ENCODE measurements at regions of chr2 and their contacts with region 1.

Region 1: GRCh38 chr2:168194784-168195522 is 52.4 kb downstream of the STK39 start:
- DNase-seq: peak; percentile 55
- H3K4me3 Mint-ChIP-seq: peak overlapping the region; percentile 66
- H3K27ac Mint-ChIP-seq: peak overlapping the region; percentile 95
- H3K4me1 Mint-ChIP-seq: peaks cover 85% of the 10 kb centered on the region
- H3K27me3 Mint-ChIP-seq: no peaks in the 10 kb centered on the region

Region 2: GRCh38 chr2:166944909-166945308 is 1250.0 kb before region 1 on chr2:
- CTCF ChIA-PET with region 1: no interaction called
- POLR2A ChIA-PET with region 1: no interaction called
- intact Hi-C with region 1: no loop called
- DNase-seq: no peak
- H3K4me3 Mint-ChIP-seq: no peak overlapping the region
- H3K27ac Mint-ChIP-seq: no peak overlapping the region
- H3K4me1 Mint-ChIP-seq: no peaks in the 10 kb centered on the region
- H3K27me3 Mint-ChIP-seq: no peaks in the 10 kb centered on the region

Region 3: DNA sequence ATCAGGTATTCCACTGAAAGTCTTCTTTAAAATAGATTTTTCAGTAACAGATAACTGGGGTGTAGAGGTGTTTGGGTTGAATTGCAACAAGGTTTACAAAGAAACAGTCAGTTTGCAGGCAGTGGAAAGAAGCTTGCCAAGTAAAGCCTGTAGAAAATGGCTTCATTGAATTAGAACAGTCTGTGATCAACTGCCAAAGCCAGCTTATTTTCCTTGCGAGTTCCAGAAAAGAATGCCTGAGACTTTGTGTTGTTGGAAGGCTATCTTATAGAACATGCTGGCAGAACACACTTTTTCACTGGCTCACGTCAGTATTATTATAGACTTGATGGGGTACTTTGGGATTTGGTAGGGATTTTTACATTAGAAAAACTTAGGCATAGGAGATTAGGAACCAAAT is 705.6 kb before region 1 on chr2:
- CTCF ChIA-PET with region 1: no interaction called
- POLR2A ChIA-PET with region 1: no interaction called
- intact Hi-C with region 1: no loop called
- DNase-seq: no peak
- H3K4me3 Mint-ChIP-seq: no peak overlapping the region
- H3K27ac Mint-ChIP-seq: no peak overlapping the region
- H3K4me1 Mint-ChIP-seq: no peaks in the 10 kb centered on the region
- H3K27me3 Mint-ChIP-seq: no peaks in the 10 kb centered on the region

Region 4: DNA sequence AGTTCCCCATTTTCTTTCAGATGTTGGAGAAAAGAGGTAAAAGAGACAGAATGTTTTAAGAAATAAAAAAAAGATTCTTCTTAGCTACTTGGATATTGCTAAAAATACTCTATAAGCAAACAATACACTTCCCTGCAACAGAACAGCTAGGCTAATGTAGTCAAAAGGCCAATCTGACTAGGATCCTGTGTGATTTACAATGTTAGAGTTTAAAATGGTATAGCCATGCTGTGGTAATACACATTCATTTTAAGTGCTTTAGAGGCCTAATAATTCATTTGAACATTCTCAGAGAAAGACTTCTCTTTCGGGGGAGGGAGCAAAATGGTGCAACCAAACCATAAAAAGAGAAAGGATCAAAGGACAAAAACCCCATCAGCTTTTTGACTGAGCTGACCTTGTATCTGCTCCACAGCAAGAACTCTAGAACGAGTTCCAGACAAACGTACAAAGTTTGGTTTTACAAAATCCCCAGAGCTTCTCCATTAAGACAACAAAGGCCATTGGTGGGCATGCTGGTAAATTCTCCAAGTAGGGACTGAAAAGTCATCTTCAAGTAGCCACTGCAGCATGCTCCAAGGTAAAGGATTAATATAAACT is 147.8 kb before region 1 on chr2:
- CTCF ChIA-PET with region 1: no interaction called
- POLR2A ChIA-PET with region 1: no interaction called
- intact Hi-C with region 1: no loop called
- DNase-seq: no peak
- H3K4me3 Mint-ChIP-seq: no peak overlapping the region
- H3K27ac Mint-ChIP-seq: no peak overlapping the region
- H3K4me1 Mint-ChIP-seq: peaks cover 18% of the 10 kb centered on the region
- H3K27me3 Mint-ChIP-seq: no peaks in the 10 kb centered on the region

Region 5: GRCh38 chr2:168166902-168167510 is 27.9 kb before region 1 on chr2:
- CTCF ChIA-PET with region 1: no interaction called
- POLR2A ChIA-PET with region 1: no interaction called
- intact Hi-C with region 1: loop called (anchors 1 kb)
- DNase-seq: peak; percentile 37
- H3K4me3 Mint-ChIP-seq: no peak overlapping the region
- H3K27ac Mint-ChIP-seq: peak overlapping the region; percentile 26
- H3K4me1 Mint-ChIP-seq: peaks cover 39% of the 10 kb centered on the region
- H3K27me3 Mint-ChIP-seq: no peaks in the 10 kb centered on the region

Region 6: GRCh38 chr2:168184681-168185513 is 10.1 kb before region 1 on chr2:
- CTCF ChIA-PET with region 1: interaction called, 3 read pairs
- POLR2A ChIA-PET with region 1: no interaction called
- intact Hi-C with region 1: loop called (anchors 1 kb)
- DNase-seq: no peak
- H3K4me3 Mint-ChIP-seq: no peak overlapping the region
- H3K27ac Mint-ChIP-seq: no peak overlapping the region
- H3K4me1 Mint-ChIP-seq: peaks cover 62% of the 10 kb centered on the region
- H3K27me3 Mint-ChIP-seq: no peaks in the 10 kb centered on the region

Region 7: DNA sequence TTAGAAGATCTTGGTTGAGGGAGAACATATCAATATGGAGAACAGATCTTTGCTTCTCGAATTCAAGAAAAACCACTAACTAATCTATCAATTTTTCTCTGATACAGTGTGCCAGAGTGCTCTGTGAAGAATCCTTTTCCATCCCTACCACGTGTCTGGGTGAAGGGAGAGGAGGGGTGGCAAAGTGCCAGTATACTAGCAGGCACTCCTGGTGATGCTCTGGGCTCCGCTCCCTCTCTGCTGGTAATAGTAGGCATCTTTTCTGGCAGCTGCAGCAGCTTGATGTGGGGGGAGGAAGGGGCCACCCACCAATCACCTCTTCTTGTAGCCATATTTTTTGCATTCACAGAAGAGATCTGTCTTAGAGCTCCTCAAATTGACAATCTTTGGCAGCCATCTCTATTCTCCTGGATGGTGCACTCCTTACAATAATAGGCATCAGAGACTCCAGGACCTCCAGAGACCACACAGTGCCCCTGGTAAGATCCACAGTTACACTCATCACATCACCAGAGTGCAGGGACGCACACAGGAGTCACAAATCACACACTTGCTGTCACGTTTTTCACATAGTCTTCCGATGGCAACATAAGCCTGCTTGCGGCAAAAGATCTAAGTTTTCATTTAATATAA is 36.8 kb after region 1 on chr2:
- CTCF ChIA-PET with region 1: no interaction called
- POLR2A ChIA-PET with region 1: interaction called, 4 read pairs
- intact Hi-C with region 1: loop called (anchors 2 kb)
- DNase-seq: no peak
- H3K4me3 Mint-ChIP-seq: no peak overlapping the region
- H3K27ac Mint-ChIP-seq: no peak overlapping the region
- H3K4me1 Mint-ChIP-seq: peaks cover 46% of the 10 kb centered on the region
- H3K27me3 Mint-ChIP-seq: no peaks in the 10 kb centered on the region

Region 8: DNA sequence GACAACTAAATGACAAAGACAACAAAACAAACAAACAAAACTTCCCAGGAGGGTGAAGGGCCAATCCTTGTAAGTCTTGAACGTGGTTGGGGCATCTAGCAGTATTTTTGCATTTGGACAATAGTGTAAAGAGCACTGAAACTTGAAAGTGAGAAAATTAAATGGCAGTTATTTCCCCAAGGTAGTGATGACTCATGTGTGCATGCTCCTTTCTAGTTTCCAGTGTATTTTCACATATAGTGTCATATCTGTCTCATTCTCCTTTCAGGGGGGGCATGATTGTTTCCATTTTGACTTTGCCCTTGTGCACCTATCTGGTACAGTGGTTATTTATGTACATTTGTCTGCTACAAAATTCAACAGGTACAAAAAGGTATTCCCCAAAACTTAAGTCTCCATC is 300.6 kb after region 1 on chr2:
- CTCF ChIA-PET with region 1: no interaction called
- POLR2A ChIA-PET with region 1: no interaction called
- intact Hi-C with region 1: loop called (anchors 1 kb)
- DNase-seq: no peak
- H3K4me3 Mint-ChIP-seq: no peak overlapping the region
- H3K27ac Mint-ChIP-seq: no peak overlapping the region
- H3K4me1 Mint-ChIP-seq: peaks cover 39% of the 10 kb centered on the region
- H3K27me3 Mint-ChIP-seq: peaks cover 7% of the 10 kb centered on the region

Measured in activated CD4-positive, alpha-beta memory T cell treated with anti-CD3 and anti-CD28 coated beads for 36 hours (primary cell).